ENCODE measurements at regions of chr5 and their contacts with region 1.

Region 1: GRCh38 chr5:152532714-152533113 is 127.6 kb upstream of the NMUR2 start:
- DNase-seq: no peak
- H3K4me3 ChIP-seq: no peak overlapping the region
- H3K27ac ChIP-seq: no peak overlapping the region
- H3K4me1 ChIP-seq: peaks cover 10% of the 10 kb centered on the region
- H3K27me3 ChIP-seq: no peaks in the 10 kb centered on the region
- CTCF ChIP-seq: peak; percentile 54

Region 2: DNA sequence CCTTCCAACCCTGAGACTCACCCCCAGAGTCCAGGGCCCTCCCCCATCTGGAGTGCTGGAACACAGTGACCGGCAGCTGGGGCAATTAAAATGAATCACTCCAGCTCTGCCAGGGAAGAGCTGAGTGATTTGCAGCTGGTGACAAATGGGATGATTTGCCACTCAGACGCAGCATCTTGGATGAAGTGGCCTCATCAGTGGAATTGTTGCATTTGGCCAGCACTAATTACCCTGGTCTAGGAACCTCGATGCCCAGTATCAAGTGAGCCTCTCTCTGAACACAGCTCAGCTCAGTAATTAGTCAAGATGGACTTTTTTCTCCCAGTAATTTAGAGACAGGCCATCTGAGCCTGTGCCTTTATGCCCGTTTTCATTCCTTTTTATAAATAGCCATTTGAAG is 1217.2 kb after region 1 on chr5:
- intact Hi-C with region 1: no loop called
- DNase-seq: no peak
- H3K4me3 ChIP-seq: no peak overlapping the region
- H3K27ac ChIP-seq: no peak overlapping the region
- H3K4me1 ChIP-seq: no peaks in the 10 kb centered on the region
- H3K27me3 ChIP-seq: peaks cover 5% of the 10 kb centered on the region
- CTCF ChIP-seq: no peak

Region 3: GRCh38 chr5:153964880-153965645 is 1432.3 kb after region 1 on chr5:
- intact Hi-C with region 1: loop called (anchors 2 kb)
- DNase-seq: no peak
- H3K4me3 ChIP-seq: peak overlapping the region; percentile 30
- H3K27ac ChIP-seq: no peak overlapping the region
- H3K4me1 ChIP-seq: peaks cover 2% of the 10 kb centered on the region
- H3K27me3 ChIP-seq: no peaks in the 10 kb centered on the region
- CTCF ChIP-seq: peak; percentile 88